ENCODE measurements at regions of chr20 and their contacts with region 1.

Region 1: DNA sequence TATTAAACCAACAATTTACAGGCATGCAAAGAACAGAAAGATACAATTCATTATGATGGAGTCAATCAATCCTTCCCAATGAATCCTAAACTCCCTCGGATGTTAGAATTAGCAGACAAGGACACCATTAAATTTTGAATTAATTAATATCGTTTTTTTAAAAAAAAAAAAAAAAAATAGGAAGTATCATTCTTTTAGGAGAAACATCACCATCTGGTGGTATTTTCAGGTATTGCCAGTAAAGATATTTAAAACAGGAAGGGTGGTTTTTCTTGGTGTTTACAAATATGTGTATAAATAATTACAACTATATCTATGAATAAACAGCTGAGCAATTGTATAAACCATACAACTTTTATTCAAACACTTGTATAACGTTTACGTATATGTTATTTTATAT is 564.4 kb downstream of the HAO1 start:
- DNase-seq: no peak
- H3K4me3 ChIP-seq: no peak overlapping the region
- H3K27ac ChIP-seq: no peak overlapping the region
- H3K4me1 ChIP-seq: peaks cover 13% of the 10 kb centered on the region
- H3K27me3 ChIP-seq: no peaks in the 10 kb centered on the region
- CTCF ChIP-seq: peak; percentile 53 to 55

Region 2: GRCh38 chr20:6142348-6142993 is 1233.4 kb before region 1 on chr20:
- CTCF ChIA-PET with region 1: no interaction called
- dilution Hi-C with region 1: no loop called
- in situ Hi-C with region 1: no loop called
- intact Hi-C with region 1: loop called (anchors 10 kb)
- DNase-seq: peak; percentile 36
- H3K4me3 ChIP-seq: no peak overlapping the region
- H3K27ac ChIP-seq: no peak overlapping the region
- H3K4me1 ChIP-seq: no peaks in the 10 kb centered on the region
- H3K27me3 ChIP-seq: no peaks in the 10 kb centered on the region
- CTCF ChIP-seq: peak; percentile 76 to 88

Region 3: GRCh38 chr20:6940046-6940445 is 435.9 kb before region 1 on chr20:
- CTCF ChIA-PET with region 1: no interaction called
- dilution Hi-C with region 1: no loop called
- in situ Hi-C with region 1: no loop called
- intact Hi-C with region 1: loop called (anchors 2 kb)
- DNase-seq: peak; percentile 1
- H3K4me3 ChIP-seq: no peak overlapping the region
- H3K27ac ChIP-seq: no peak overlapping the region
- H3K4me1 ChIP-seq: peaks cover 6% of the 10 kb centered on the region
- H3K27me3 ChIP-seq: no peaks in the 10 kb centered on the region
- CTCF ChIP-seq: peak; percentile 85 to 88

Region 4: DNA sequence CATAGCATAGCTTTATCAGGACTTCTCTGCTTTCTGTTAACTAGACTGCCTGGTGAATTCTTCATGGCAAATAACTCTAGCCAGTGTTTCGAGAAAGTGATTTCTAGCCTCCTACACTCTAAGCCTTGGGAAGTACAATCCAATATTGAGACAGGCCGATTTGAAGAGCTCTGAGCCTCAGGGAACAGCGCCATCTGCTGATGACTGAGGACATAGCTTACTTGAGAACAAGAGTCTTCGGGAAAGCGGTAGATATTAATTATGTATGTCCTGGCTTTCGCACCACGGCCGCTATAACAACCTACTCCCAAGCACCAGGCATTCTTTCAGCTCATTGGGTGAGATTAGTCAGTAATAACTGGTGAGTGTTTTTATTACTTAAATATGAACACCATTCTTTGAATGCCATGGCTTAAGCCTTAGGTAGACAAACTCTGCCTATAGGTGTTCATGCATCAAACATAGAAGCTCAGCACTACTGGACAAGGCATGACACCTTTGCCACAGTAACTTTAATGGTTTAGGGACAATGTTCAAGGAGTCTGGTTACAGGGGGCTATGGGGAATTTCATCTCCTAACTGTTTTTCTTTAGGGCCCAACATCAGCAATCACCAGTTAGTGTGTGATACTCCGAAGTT is 89.9 kb before region 1 on chr20:
- CTCF ChIA-PET with region 1: interaction called, 10 read pairs
- dilution Hi-C with region 1: no loop called
- in situ Hi-C with region 1: no loop called
- intact Hi-C with region 1: loop called (anchors 2 kb)
- DNase-seq: peak; percentile 71
- H3K4me3 ChIP-seq: no peak overlapping the region
- H3K27ac ChIP-seq: no peak overlapping the region
- H3K4me1 ChIP-seq: no peaks in the 10 kb centered on the region
- H3K27me3 ChIP-seq: no peaks in the 10 kb centered on the region
- CTCF ChIP-seq: peak; percentile 92 to 93

Region 5: GRCh38 chr20:7346562-7346961 is 29.3 kb before region 1 on chr20:
- CTCF ChIA-PET with region 1: no interaction called
- dilution Hi-C with region 1: no loop called
- in situ Hi-C with region 1: no loop called
- intact Hi-C with region 1: loop called (anchors 2 kb)
- DNase-seq: peak; percentile 96
- H3K4me3 ChIP-seq: no peak overlapping the region
- H3K27ac ChIP-seq: peak overlapping the region; percentile 99
- H3K4me1 ChIP-seq: peaks cover 29% of the 10 kb centered on the region
- H3K27me3 ChIP-seq: no peaks in the 10 kb centered on the region
- CTCF ChIP-seq: no peak